PC-3 (cell line): ENCODE measurements at regions of chr4 and their contacts with region 1.

Region 1: GRCh38 chr4:113801882-113802281 is 40.3 kb upstream of the CAMK2D start:
- DNase-seq: no peak
- ATAC-seq: no peak
- H3K4me3 ChIP-seq: no peak overlapping the region
- H3K27ac ChIP-seq: no peak overlapping the region
- H3K4me1 ChIP-seq: no peaks in the 10 kb centered on the region
- H3K27me3 ChIP-seq: no peaks in the 10 kb centered on the region
- CTCF ChIP-seq: no peak

Region 2: GRCh38 chr4:113790478-113790877 is 11.4 kb before region 1 on chr4:
- CTCF ChIA-PET with region 1: no interaction called
- POLR2A ChIA-PET with region 1: interaction called, 13 read pairs
- intact Hi-C with region 1: no loop called
- DNase-seq: no peak
- ATAC-seq: no peak
- H3K4me3 ChIP-seq: no peak overlapping the region
- H3K27ac ChIP-seq: no peak overlapping the region
- H3K4me1 ChIP-seq: peaks cover 3% of the 10 kb centered on the region; the same call in 1 of the 2 replicates
- H3K27me3 ChIP-seq: no peaks in the 10 kb centered on the region
- CTCF ChIP-seq: no peak

Region 3: GRCh38 chr4:113828702-113829101 is 26.8 kb after region 1 on chr4:
- CTCF ChIA-PET with region 1: no interaction called
- POLR2A ChIA-PET with region 1: no interaction called
- intact Hi-C with region 1: loop called (anchors 2 kb)
- DNase-seq: peak; percentile 54
- ATAC-seq: peak; percentile 78
- H3K4me3 ChIP-seq: no peak overlapping the region
- H3K27ac ChIP-seq: peak overlapping the region; percentile 39; the same call in 1 of the 2 replicates
- H3K4me1 ChIP-seq: peaks cover 26% of the 10 kb centered on the region
- H3K27me3 ChIP-seq: no peaks in the 10 kb centered on the region
- CTCF ChIP-seq: no peak

Region 4: DNA sequence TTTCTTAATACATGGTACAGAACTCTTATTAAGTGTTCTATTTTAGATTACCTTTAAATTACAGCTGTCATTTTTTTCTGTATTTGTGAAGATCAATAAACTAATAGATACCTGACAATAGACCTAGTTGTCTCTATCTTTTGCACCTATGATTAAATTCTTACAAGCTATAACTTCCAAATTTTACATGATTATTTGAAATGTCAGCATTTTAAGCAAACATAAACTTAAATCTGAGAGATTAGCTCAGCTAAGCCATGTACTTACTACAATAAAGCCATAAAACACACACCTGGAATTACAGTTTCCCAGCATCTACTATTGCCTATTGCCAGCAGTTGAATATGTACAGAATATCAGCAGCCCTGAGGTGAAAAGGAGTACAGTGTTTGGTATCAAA is 915.5 kb after region 1 on chr4:
- CTCF ChIA-PET with region 1: no interaction called
- POLR2A ChIA-PET with region 1: no interaction called
- intact Hi-C with region 1: no loop called
- DNase-seq: no peak
- ATAC-seq: no peak
- H3K4me3 ChIP-seq: no peak overlapping the region
- H3K27ac ChIP-seq: no peak overlapping the region
- H3K4me1 ChIP-seq: no peaks in the 10 kb centered on the region
- H3K27me3 ChIP-seq: no peaks in the 10 kb centered on the region
- CTCF ChIP-seq: no peak